Adrenal gland (tissue), 19 donors: ENCODE measurements at regions of chr18 and their contacts with region 1.

Region 1: DNA sequence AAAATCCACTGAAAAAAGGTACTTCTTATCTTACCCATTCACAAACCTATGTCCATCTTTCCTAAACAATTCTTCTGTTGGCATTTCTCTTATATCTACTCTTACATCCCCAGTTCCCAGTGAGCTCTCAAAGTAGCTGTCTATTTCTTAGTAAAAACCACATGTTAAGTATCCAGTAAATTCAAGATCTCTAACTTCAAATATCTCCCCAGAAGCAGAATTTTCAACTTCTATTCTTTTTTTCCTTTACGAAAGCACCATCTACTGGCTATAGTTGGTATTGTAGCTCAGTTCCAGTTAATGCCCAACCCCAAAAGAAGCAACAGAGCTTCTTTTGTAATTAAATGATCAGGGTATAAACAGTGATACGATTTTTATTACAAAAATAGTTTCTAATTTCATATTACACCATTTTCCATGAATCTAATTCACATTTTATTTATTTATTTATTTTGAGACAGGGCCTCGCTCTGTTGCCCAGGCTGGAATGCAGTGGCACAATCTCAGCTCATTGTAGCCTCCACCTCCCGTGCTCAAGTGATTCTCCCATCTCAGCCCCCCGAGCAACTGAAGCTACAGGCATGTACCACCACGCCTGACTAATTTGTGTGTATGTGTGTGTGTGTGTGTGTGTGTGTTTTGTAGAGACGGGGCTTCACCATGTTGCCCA is 28.5 kb downstream of the HRH4 start:
- DNase-seq: no peak
- H3K4me3 ChIP-seq: no peak overlapping the region
- H3K27ac ChIP-seq: no peak overlapping the region
- H3K4me1 ChIP-seq: no peaks in the 10 kb centered on the region
- H3K27me3 ChIP-seq: peaks cover 6% of the 10 kb centered on the region
- CTCF ChIP-seq: peak; percentile 66 to 86 (median 78)
- POLR2A ChIP-seq: no peak

Region 2: DNA sequence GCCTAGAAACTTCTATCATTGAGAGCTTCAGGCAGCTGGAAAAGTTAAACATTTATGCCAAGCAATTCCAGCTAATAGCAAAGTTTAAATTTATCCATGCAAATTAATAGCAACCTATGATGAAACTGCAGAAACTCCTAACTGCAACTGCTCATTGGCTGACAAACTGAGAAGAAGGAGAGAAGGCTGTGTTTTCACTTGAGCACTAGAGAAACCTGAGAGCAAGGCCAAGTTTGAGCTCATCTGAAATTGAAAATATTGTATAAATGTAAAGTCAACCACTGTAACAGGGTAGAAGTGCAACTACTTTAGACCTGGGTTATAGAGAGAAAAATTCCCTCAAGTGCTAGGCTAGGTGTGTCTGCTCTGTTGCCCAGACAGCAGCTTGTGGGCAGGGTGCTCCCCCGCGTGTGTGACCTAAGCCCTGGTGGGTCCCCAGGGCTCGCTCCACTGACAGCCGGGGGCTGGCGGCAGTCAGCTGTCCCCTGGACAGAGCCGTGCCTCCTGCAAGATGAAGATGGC is 299.9 kb before region 1 on chr18:
- intact Hi-C with region 1: loop called in 1 of 2 experiments (anchors 10 kb)
- DNase-seq: no peak
- H3K4me3 ChIP-seq: no peak overlapping the region
- H3K27ac ChIP-seq: no peak overlapping the region
- H3K4me1 ChIP-seq: peaks cover 0 to 7% of the 10 kb centered on the region in 2 donors
- H3K27me3 ChIP-seq: no peaks in the 10 kb centered on the region
- CTCF ChIP-seq: no peak
- POLR2A ChIP-seq: no peak

Region 3: GRCh38 chr18:24362758-24363157 is 126.2 kb before region 1 on chr18:
- intact Hi-C with region 1: loop called (anchors 5 kb)
- DNase-seq: no peak
- H3K4me3 ChIP-seq: no peak overlapping the region
- H3K27ac ChIP-seq: no peak overlapping the region
- H3K4me1 ChIP-seq: no peaks in the 10 kb centered on the region
- H3K27me3 ChIP-seq: no peaks in the 10 kb centered on the region
- CTCF ChIP-seq: no peak
- POLR2A ChIP-seq: no peak

Region 4: DNA sequence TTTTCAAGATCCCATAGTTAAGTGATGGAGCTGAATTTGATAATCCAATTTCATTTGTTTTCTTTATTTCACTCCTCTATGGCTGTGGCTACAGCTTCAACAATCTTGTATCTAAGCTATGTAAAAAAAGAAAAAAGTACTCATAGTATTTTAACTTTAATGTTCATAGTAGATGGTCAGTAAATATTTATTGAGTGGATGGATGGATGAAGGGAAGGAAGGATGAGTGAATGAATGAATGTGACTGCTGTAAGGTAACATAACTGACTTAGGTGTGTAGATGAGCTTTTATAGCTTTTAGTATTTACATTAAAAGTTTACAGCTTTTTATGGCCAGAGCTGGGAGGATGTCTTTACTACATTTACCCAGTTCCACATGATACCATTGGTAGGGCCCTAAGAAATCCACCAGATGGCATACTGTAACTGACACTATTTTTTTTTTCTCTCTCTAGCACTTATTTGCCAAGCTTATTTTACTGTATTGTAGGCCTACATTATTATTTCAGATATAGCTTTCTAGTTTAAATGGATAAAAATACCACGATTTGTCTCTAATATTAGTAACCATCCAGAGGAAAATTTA is 41.9 kb before region 1 on chr18:
- intact Hi-C with region 1: no loop called
- DNase-seq: no peak
- H3K4me3 ChIP-seq: no peak overlapping the region
- H3K27ac ChIP-seq: no peak overlapping the region
- H3K4me1 ChIP-seq: no peaks in the 10 kb centered on the region
- H3K27me3 ChIP-seq: no peaks in the 10 kb centered on the region
- CTCF ChIP-seq: no peak
- POLR2A ChIP-seq: no peak

Region 5: GRCh38 chr18:24546304-24546703 is 57.3 kb after region 1 on chr18:
- intact Hi-C with region 1: no loop called
- DNase-seq: no peak
- H3K4me3 ChIP-seq: no peak overlapping the region
- H3K27ac ChIP-seq: no peak overlapping the region
- H3K4me1 ChIP-seq: no peaks in the 10 kb centered on the region
- H3K27me3 ChIP-seq: no peaks in the 10 kb centered on the region
- CTCF ChIP-seq: no peak
- POLR2A ChIP-seq: no peak

Region 6: GRCh38 chr18:24726727-24727492 is 238.0 kb after region 1 on chr18:
- intact Hi-C with region 1: loop called in 1 of 2 experiments (anchors 5 kb)
- DNase-seq: peak; percentile 50 to 79 (median 64)
- H3K4me3 ChIP-seq: no peak overlapping the region
- H3K27ac ChIP-seq: no peak overlapping the region
- H3K4me1 ChIP-seq: peaks cover 0 to 3% of the 10 kb centered on the region in 2 donors
- H3K27me3 ChIP-seq: peaks cover 22% of the 10 kb centered on the region
- CTCF ChIP-seq: peak; percentile 72 to 87 (median 79)
- POLR2A ChIP-seq: no peak